MCF 10A (cell line): ENCODE measurements at regions of chr10 and their contacts with region 1.

Region 1: GRCh38 chr10:3816995-3817394 is 32.0 kb upstream of the KLF6 start:
- DNase-seq: no peak
- H3K4me3 Mint-ChIP-seq: no peak overlapping the region
- H3K27ac Mint-ChIP-seq: peak overlapping the region; percentile 52
- H3K4me1 Mint-ChIP-seq: peaks cover 3% of the 10 kb centered on the region
- H3K27me3 Mint-ChIP-seq: no peaks in the 10 kb centered on the region
- CTCF ChIP-seq: no peak

Region 2: DNA sequence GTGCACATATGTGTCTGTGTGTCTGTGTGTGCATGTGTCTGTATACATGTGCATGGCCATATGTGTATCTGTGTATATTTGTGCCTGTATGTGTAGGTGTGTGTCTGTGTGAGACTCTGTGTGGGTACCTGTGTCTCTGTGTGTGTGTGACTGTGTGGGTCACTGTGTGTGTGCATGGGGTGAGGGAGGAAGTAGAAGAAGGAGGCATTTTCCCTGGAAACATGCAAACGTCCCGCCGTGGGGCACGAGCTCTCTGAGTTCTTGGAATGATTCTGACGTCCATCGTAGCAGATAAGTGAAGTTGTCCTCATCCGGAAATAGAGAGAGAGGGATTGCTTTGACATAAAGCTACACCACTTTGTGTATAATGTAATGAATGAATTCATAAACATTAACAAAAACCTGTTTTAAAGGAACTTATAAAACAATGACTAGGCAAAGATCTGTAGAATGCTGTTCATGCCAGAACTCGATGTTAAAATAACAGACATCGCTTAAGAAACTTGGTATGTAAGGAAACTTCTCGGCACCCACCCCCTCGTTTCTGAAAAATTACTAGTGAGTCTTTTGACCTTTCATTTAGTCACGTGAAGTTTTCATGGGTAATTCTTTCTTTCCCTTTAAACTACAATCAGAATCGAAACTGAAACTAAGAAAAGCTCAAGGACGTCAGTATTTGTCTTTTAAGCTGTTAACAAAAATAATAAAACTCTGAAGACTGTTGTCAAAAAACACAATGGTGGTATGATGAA is 11.6 kb after region 1 on chr10:
- CTCF ChIA-PET with region 1: interaction called, 3 read pairs
- POLR2A ChIA-PET with region 1: interaction called, 150 read pairs
- intact Hi-C with region 1: no loop called
- DNase-seq: peak; percentile 55
- H3K4me3 Mint-ChIP-seq: peak overlapping the region; percentile 52
- H3K27ac Mint-ChIP-seq: peak overlapping the region; percentile 69
- H3K4me1 Mint-ChIP-seq: peaks cover 25% of the 10 kb centered on the region
- H3K27me3 Mint-ChIP-seq: no peaks in the 10 kb centered on the region
- CTCF ChIP-seq: no peak